Posterior vena cava (tissue), 2 donors: ENCODE measurements at regions of chr12 and their contacts with region 1.

Region 1: DNA sequence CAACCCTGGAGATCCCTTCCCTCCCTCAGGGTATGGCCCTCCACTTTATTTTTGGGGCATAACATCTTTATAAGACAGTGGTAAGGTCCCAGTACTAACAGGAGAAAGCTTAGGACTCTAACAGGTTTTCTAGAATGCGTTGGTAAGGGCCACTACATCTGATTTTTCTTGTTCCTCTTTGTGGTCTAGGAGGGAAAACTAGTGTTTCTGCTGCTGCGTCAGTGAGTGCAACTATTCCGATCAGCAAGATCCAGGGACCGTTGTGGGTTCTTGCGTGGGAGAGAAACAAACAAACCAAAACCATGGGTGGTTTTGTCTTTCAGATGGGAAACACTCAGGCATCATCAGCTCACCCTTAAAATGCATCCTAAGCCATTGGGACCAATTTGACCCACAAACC is 123.6 kb upstream of the SLC16A7 start:
- DNase-seq: no peak

Region 2: GRCh38 chr12:59077575-59078426 is 394.5 kb before region 1 on chr12:
- intact Hi-C with region 1: no loop called
- DNase-seq: no peak

Region 3: GRCh38 chr12:61098031-61098580 is 1625.8 kb after region 1 on chr12:
- intact Hi-C with region 1: loop called in 1 of 2 experiments (anchors 5 kb)
- DNase-seq: peak; percentile 70